Transverse colon (tissue), 4 donors: ENCODE measurements at regions of chr4 and their contacts with region 1.

Region 1: GRCh38 chr4:77358315-77358928 is 201.4 kb downstream of the CCNG2 start:
- DNase-seq: no peak
- H3K4me3 ChIP-seq: no peak overlapping the region
- H3K27ac ChIP-seq: no peak overlapping the region
- H3K4me1 ChIP-seq: no peaks in the 10 kb centered on the region
- H3K27me3 ChIP-seq: no peaks in the 10 kb centered on the region
- CTCF ChIP-seq: peak; percentile 49 to 63 (median 52)
- EP300 ChIP-seq: no peak
- POLR2A ChIP-seq: no peak

Region 2: GRCh38 chr4:77052352-77052751 is 306.1 kb before region 1 on chr4:
- in situ Hi-C with region 1: no loop called
- intact Hi-C with region 1: no loop called
- DNase-seq: peak; percentile 71
- H3K4me3 ChIP-seq: no peak overlapping the region
- H3K27ac ChIP-seq: no peak overlapping the region
- H3K4me1 ChIP-seq: peaks cover 0 to 5% (median 4%) of the 10 kb centered on the region in 4 donors
- H3K27me3 ChIP-seq: no peaks in the 10 kb centered on the region
- CTCF ChIP-seq: peak; percentile 42 to 51 (median 45)
- EP300 ChIP-seq: no peak
- POLR2A ChIP-seq: no peak

Region 3: DNA sequence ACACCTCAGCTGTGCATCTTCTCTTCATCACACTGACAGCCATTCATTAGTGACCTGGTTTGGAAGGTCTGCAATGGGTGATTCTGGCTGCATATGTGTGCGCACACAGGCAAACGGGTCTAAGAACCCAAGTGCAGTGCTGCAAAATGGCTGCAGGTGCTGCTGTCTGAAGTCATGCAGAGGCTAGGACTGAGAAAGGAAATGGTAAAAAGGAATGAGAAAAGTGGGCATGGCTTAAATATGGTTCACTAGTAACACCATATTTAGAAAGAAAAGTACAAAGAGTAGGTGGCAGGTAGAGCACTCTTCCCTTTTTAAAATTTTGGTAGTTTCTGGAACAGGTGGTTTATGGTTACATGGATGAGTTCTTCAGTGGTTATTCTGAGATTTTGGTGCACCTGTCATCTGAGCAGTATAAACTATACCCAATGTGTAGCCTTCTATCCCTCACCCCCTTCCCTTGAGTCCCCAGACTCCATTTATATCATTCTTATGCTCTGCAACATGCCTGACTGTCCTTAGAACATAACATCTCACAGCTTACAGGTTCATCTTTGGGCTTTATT is 123.0 kb before region 1 on chr4:
- in situ Hi-C with region 1: loop called in 3 of 4 experiments (anchors 5 to 10 kb)
- intact Hi-C with region 1: no loop called
- DNase-seq: no peak
- H3K4me3 ChIP-seq: no peak overlapping the region
- H3K27ac ChIP-seq: no peak overlapping the region
- H3K4me1 ChIP-seq: no peaks in the 10 kb centered on the region
- H3K27me3 ChIP-seq: no peaks in the 10 kb centered on the region
- CTCF ChIP-seq: no peak
- EP300 ChIP-seq: no peak
- POLR2A ChIP-seq: no peak

Region 4: DNA sequence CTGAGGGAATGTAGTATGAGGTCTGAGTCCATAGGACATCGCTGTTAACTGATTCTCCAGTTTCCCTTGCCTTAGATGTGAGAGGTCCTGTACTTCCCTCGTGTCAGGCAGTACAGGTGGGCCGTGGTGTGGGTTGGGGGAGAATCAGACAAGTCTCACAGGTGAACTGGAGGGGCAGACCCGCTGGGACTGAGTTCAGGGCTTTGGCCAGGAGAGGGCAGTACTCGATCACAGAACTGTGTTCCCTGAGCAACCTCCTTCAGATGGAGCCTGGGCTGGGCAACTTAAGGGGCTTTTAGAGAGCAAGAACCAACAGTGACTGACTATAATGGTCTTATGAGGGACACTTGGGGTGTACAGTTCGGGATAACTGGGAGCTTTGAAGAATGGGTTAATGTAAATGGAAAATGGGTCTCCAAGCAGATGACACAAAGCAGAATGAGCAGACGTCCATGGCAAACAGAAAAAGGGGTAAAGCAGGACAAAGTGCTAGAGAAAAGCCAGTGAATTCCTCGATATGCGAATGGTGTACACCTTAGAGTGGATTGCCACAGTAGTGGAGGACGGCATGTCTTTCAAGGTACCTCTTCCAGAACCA is 117.9 kb before region 1 on chr4:
- in situ Hi-C with region 1: loop called in 3 of 4 experiments (anchors 5 to 10 kb)
- intact Hi-C with region 1: no loop called
- DNase-seq: peak; percentile 62
- H3K4me3 ChIP-seq: no peak overlapping the region
- H3K27ac ChIP-seq: no peak overlapping the region
- H3K4me1 ChIP-seq: no peaks in the 10 kb centered on the region
- H3K27me3 ChIP-seq: no peaks in the 10 kb centered on the region
- CTCF ChIP-seq: peak; percentile 51 to 75 (median 66)
- EP300 ChIP-seq: no peak
- POLR2A ChIP-seq: no peak

Region 5: GRCh38 chr4:77293436-77293835 is 65.0 kb before region 1 on chr4:
- in situ Hi-C with region 1: no loop called
- intact Hi-C with region 1: no loop called
- DNase-seq: no peak
- H3K4me3 ChIP-seq: no peak overlapping the region
- H3K27ac ChIP-seq: no peak overlapping the region
- H3K4me1 ChIP-seq: no peaks in the 10 kb centered on the region
- H3K27me3 ChIP-seq: no peaks in the 10 kb centered on the region
- CTCF ChIP-seq: no peak
- EP300 ChIP-seq: no peak
- POLR2A ChIP-seq: no peak

Region 6: GRCh38 chr4:77800483-77801259 is 442.2 kb after region 1 on chr4:
- in situ Hi-C with region 1: no loop called
- intact Hi-C with region 1: no loop called
- DNase-seq: no peak
- H3K4me3 ChIP-seq: no peak overlapping the region
- H3K27ac ChIP-seq: peak overlapping the region in 3 of 4 donors; percentile 8 to 52 (median 28)
- H3K4me1 ChIP-seq: peaks cover 10 to 72% (median 25%) of the 10 kb centered on the region in 4 donors
- H3K27me3 ChIP-seq: no peaks in the 10 kb centered on the region
- CTCF ChIP-seq: no peak
- EP300 ChIP-seq: no peak
- POLR2A ChIP-seq: no peak